Thyroid gland (tissue), 4 donors: ENCODE measurements at regions of chr12 and their contacts with region 1.

Region 1: DNA sequence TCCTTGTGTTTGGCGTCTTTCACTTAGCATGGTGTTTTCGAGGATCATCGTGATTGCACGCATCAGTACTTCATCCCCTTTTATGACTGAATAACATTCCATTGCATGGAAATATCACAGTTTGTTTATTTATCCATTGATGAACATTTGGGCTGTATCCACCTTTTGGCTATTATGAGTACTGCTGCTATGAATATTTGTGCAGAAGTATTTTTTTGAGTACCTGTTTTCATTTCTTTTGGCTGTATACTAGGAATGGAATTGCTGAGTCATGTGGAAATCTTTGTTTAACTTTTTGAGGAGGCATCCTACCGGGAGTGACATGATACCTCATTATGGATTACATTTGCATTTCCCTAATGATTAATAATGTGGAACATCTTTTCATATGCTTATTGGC is 66.4 kb downstream of the WNK1 start:
- DNase-seq: no peak
- H3K4me3 ChIP-seq: no peak overlapping the region
- H3K27ac ChIP-seq: peak overlapping the region in 2 of 3 donors; percentile 3 to 18
- H3K4me1 ChIP-seq: peaks cover 0 to 8% of the 10 kb centered on the region in 2 donors
- H3K27me3 ChIP-seq: no peaks in the 10 kb centered on the region
- CTCF ChIP-seq: peak in 3 of 6 experiments; percentile 15 to 32 (median 29)
- POLR2A ChIP-seq: no peak

Region 2: GRCh38 chr12:949453-950191 is 130.9 kb after region 1 on chr12 and contains the start of gene RAD52:
- intact Hi-C with region 1: loop called (anchors 5 kb)
- DNase-seq: peak; percentile 97 to 98
- H3K4me3 ChIP-seq: peak within 1 kb of the TSS; percentile 29 to 67 (median 49)
- H3K27ac ChIP-seq: peak within 1 kb of the TSS; percentile 65 to 92 (median 74)
- H3K4me1 ChIP-seq: peaks cover 4 to 21% of the 10 kb centered on the region in 2 donors
- H3K27me3 ChIP-seq: no peaks in the 10 kb centered on the region
- CTCF ChIP-seq: peak; percentile 94 to 99 (median 97)
- POLR2A ChIP-seq: peak; percentile 21 to 83
- total RNA-seq, gene RAD52: 27.4 to 35.1 (median 31.0) TPM